ENCODE measurements at regions of chrX and their contacts with region 1.

Region 1: DNA sequence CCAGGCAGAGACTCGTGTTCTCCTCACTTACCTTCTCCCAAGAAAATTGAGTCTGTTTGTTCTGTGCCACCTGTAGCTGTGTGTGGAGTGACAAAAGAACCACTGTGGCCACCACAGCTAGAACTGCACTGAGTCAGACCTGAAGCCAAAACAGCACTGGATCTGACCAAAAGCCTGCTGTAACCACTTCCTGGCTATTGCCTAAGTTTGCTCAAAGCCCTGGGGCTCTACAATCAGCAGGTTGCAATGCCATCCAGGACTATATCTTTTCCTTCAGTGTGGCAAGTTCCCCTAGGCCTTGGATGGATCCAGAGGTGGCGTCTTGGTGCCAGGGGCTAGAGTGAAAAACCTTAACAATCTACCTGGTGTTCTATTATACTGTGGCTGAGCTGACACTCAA is 449.1 kb downstream of the FAM133A start:
- DNase-seq: no peak
- H3K4me3 ChIP-seq: no peak overlapping the region
- CTCF ChIP-seq: no peak
- POLR2A ChIP-seq: no peak

Region 2: GRCh38 chrX:94089149-94089548 is 33.9 kb before region 1 on chrX:
- intact Hi-C with region 1: loop called (anchors 1 kb)
- DNase-seq: no peak
- H3K4me3 ChIP-seq: no peak overlapping the region
- CTCF ChIP-seq: no peak
- POLR2A ChIP-seq: no peak